ENCODE measurements at regions of chr2 and their contacts with region 1.

Region 1: DNA sequence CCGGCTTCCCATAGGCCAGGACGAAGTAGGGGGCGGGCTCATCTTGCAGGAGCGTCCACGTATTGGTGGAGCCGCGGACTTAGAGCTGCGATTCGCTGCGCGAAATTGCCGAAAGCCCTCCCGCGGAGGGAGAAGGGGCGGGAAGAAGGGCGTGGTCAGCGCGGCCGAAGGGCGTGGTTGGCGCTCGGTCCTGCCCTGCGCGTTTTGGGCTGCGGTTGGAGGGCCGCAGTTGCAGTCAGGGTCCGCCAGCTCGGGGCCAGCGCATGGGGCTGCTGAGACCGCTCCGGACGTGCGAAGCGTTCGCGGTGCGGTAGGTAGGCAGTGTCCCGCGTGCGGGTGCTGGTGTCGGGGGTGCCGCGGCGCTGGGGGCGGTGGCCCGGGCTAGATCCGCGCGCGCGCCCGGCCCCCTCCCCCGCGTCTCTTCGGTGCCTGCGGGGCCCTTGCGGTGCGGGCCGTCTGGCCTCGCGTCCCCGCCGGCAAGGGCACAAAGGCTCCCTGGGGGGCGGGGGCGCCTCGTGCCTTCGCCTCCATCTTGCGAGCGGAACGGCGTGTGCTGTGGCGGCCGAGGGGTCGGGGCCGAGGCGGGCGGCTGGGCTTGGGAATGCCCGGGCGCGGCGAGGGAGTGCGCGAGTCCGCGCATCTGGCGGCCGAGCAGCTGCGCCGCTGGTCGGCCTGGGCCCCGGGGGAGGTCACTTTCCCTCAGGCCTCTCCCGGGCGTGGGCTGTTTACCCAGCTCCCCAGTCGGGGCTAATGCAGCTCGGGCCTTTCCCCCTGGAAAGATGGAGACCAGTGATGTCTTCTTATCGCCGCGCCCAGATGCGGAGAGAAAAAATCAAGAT is at the start of gene CEP68:
- DNase-seq: peak; percentile 95 to 98
- H3K4me3 ChIP-seq: peak within 1 kb of the TSS; percentile 67 to 86 (median 76)
- H3K27ac ChIP-seq: peak within 1 kb of the TSS; percentile 78
- H3K4me1 ChIP-seq: peaks cover 0 to 7% (median 3%) of the 10 kb centered on the region in 4 experiments; a peak in 4 of 7 replicates
- H3K27me3 ChIP-seq: peaks cover 0 to 3% (median 1%) of the 10 kb centered on the region in 4 experiments; a peak in 1 of 7 replicates
- CTCF ChIP-seq: no peak
- EP300 ChIP-seq: no peak
- POLR2A ChIP-seq: peak; percentile 97 to 98
- RAD21 ChIP-seq: no peak
- total RNA-seq, gene CEP68: 22.5 and 23.2 TPM in 2 replicates

Region 2: DNA sequence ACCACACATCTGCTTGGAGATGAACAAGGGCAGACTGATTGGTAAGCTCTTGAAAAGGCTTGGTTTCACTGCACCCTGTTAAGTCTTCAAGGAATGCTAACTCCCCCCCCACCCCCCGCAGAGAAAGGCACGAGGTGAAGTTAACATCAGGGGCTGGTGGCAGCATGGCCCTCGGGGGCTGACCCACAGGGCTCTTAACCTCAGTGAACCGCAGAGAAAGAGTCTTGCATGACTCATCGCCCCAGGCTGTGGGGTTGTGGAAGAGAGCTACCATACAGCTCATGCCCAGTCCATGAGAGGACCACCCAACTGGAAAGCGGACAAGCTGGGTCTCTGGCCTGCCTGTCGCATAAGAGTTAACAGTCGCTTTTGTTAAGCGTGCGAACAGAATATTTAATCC is 10.8 kb before region 1 on chr2:
- CTCF ChIA-PET with region 1: interaction called, 4 read pairs
- POLR2A ChIA-PET with region 1: interaction called, 84 read pairs
- DNase-seq: peak in 1 of 2 experiments; percentile 70
- H3K4me3 ChIP-seq: peak overlapping the region in 1 of 4 experiments; percentile 9; a peak in 1 of 8 replicates
- H3K27ac ChIP-seq: no peak overlapping the region
- H3K4me1 ChIP-seq: peaks cover 5 to 13% (median 8%) of the 10 kb centered on the region in 4 experiments; a peak in 6 of 7 replicates
- H3K27me3 ChIP-seq: no peaks in the 10 kb centered on the region
- CTCF ChIP-seq: no peak
- EP300 ChIP-seq: no peak
- POLR2A ChIP-seq: no peak
- RAD21 ChIP-seq: no peak

Region 3: GRCh38 chr2:65070172-65070830 is 13.9 kb after region 1 on chr2:
- CTCF ChIA-PET with region 1: interaction called, 17 read pairs
- POLR2A ChIA-PET with region 1: interaction called, 33 read pairs
- DNase-seq: no peak
- H3K4me3 ChIP-seq: no peak overlapping the region
- H3K27ac ChIP-seq: no peak overlapping the region
- H3K4me1 ChIP-seq: peaks cover 0 to under 1% (median 0%) of the 10 kb centered on the region in 4 experiments; a peak in 1 of 7 replicates
- H3K27me3 ChIP-seq: no peaks in the 10 kb centered on the region
- CTCF ChIP-seq: peak; percentile 3 to 37 (median 28); a peak in 3 of 4 replicates
- EP300 ChIP-seq: no peak
- POLR2A ChIP-seq: no peak
- RAD21 ChIP-seq: peak in 1 of 2 experiments; percentile 41; a peak in 2 of 4 replicates

Region 4: DNA sequence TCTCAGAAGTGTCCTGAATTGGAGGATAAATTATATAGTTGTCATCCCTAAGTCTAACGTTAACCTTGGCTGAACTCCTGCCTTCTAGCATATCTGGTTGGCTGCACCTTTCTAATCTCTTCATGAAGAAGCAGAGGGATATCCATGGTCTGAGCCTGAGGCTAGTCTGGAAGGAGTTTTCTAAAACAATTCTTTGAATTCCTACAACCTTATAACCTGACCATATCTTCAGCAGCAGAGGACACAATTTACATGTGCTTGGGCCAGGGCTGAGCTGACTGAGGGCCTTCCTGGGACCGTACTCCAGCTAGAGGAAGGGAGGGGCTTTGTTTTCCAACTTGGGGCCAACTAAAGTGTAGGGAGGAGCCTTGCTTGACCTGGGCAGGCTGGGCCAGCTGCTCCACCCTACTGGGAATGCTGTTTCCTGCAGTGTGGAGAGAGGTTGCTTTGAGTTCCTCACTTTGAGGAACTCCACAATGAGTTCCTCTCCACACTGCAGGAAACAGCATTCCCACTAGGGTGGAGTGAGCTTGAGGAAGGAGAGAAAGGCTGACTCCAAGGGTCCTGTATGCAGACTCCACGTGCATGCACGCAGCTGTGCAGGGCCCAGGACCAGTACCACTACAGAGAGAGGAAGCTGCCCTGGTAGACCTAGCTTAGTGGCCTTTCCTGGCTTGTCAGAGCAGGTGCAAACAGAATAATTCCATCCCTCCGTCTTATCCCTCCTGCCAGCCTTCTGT is 19.3 kb after region 1 on chr2:
- CTCF ChIA-PET with region 1: interaction called, 3 read pairs
- POLR2A ChIA-PET with region 1: interaction called, 14 read pairs
- DNase-seq: peak in 1 of 2 experiments; percentile 13
- H3K4me3 ChIP-seq: no peak overlapping the region
- H3K27ac ChIP-seq: no peak overlapping the region
- H3K4me1 ChIP-seq: peaks cover 0 to 18% (median 5%) of the 10 kb centered on the region in 4 experiments
- H3K27me3 ChIP-seq: no peaks in the 10 kb centered on the region
- CTCF ChIP-seq: no peak
- EP300 ChIP-seq: no peak
- POLR2A ChIP-seq: no peak
- RAD21 ChIP-seq: no peak

Region 5: GRCh38 chr2:65103013-65103715 is 46.7 kb after region 1 on chr2:
- CTCF ChIA-PET with region 1: no interaction called
- POLR2A ChIA-PET with region 1: no interaction called
- DNase-seq: no peak
- H3K4me3 ChIP-seq: no peak overlapping the region
- H3K27ac ChIP-seq: no peak overlapping the region
- H3K4me1 ChIP-seq: no peaks in the 10 kb centered on the region
- H3K27me3 ChIP-seq: no peaks in the 10 kb centered on the region
- CTCF ChIP-seq: no peak
- EP300 ChIP-seq: no peak
- POLR2A ChIP-seq: no peak
- RAD21 ChIP-seq: no peak

Region 6: GRCh38 chr2:65129826-65130663 is 73.6 kb after region 1 on chr2 and contains the start of gene RAB1A:
- CTCF ChIA-PET with region 1: no interaction called
- POLR2A ChIA-PET with region 1: interaction called, 19 read pairs
- DNase-seq: peak; percentile 95 to 100
- H3K4me3 ChIP-seq: peak within 1 kb of the TSS; percentile 90 to 92 (median 90)
- H3K27ac ChIP-seq: peak within 1 kb of the TSS; percentile 83
- H3K4me1 ChIP-seq: peaks cover 0 to 5% (median 3%) of the 10 kb centered on the region in 4 experiments; a peak in 4 of 7 replicates
- H3K27me3 ChIP-seq: no peaks in the 10 kb centered on the region
- CTCF ChIP-seq: peak; percentile 37 to 62 (median 50)
- EP300 ChIP-seq: peak in 1 of 2 experiments; percentile 30; a peak in 1 of 3 replicates
- POLR2A ChIP-seq: peak in 1 of 2 experiments; percentile 90; a peak in 1 of 3 replicates
- RAD21 ChIP-seq: peak in 1 of 2 experiments; percentile 44; a peak in 2 of 4 replicates
- total RNA-seq, gene RAB1A: 119 and 120 TPM in 2 replicates